CD8-positive, alpha-beta memory T cell (primary cell): ENCODE measurements at regions of chr15 and their contacts with region 1.

Region 1: DNA sequence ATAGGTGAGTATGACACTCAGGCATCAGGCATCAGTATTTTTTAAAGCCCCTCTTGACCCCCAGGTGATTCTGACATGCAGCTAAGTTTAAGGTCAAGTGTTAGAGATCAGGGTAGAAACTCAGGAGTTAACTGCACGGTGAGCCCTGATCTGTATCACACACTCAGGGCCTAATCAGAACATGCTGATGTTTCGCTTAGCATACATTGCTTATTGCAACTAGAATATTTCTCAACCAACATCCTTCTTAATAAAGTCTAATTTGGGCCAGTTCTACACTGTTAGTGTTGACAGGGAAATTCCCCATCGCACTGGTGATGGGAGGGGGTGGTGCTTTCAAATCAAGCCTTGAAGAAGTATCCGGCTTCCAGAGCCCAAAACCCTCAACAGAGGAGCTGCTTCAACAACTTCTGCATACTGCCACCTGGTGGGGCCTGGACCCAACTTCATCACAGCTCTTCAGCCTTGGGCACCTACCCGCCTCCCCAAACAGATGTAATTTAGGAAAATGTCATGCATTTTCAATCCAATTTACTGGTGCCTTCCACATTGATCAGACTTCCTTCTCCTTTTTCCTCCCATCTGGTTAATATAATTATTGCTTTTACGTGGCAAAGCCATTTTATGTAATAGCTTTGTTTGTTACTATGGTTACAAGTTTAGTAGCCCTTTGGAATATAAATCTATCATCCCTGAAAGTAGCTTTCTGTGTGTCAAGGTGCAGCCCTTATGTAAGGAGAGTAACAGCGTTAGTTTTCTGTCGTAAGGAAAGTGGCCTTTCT is 312.2 kb downstream of the RORA start:
- DNase-seq: peak; percentile 77 to 91 (median 78)
- H3K4me3 ChIP-seq: no peak overlapping the region
- H3K4me3 Mint-ChIP-seq: peak overlapping the region in 1 of 7 donors; percentile 44
- H3K27ac ChIP-seq: no peak overlapping the region
- H3K27ac Mint-ChIP-seq: peak overlapping the region; percentile 40 to 90 (median 72)
- H3K4me1 ChIP-seq: peaks cover 6% of the 10 kb centered on the region
- H3K4me1 Mint-ChIP-seq: peaks cover 11 to 12% (median 11%) of the 10 kb centered on the region in 3 donors
- H3K27me3 ChIP-seq: no peaks in the 10 kb centered on the region
- H3K27me3 Mint-ChIP-seq: peaks cover 0 to 2% of the 10 kb centered on the region in 2 donors

Region 2: DNA sequence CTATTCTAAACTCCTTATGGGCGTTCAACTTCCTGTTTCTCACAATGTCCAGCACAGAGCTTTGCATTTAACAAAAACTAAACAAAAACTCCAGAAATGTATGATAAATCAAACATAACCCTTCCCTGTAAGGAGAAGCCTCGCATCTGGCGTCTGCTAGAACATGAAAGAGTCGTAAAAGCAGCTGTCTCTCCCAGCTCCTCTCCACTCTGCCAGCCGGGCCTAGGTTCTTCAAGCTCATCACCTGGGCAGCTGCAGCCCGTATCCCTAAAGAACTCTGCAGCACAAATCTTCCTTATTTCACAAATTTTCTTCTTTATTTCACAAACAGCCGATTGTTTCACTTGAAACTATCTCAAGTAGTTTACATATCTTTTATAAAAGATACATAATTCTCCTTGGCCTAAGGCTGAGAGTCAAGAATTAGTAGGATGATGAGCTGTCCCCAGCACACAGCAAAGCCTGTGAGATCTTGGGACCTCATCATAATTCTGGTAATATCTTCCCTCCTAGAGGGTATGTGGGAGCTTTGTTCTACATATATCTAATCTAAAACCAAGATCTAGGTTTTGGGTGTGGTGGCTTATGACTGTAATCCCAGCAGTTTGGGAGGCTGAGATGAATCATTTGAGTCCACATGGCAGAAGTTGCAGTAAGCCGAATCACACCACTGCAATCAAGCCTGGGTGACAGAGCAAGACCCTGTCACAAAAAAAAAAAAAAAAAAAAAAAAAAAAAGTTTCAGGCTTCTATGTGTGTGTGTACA is 554.4 kb before region 1 on chr15:
- CTCF ChIA-PET with region 1: interaction called, 19 read pairs
- POLR2A ChIA-PET with region 1: no interaction called
- DNase-seq: no peak
- H3K4me3 ChIP-seq: no peak overlapping the region
- H3K4me3 Mint-ChIP-seq: no peak overlapping the region
- H3K27ac ChIP-seq: no peak overlapping the region
- H3K27ac Mint-ChIP-seq: peak overlapping the region; percentile 5 to 96 (median 48)
- H3K4me1 ChIP-seq: peaks cover 11% of the 10 kb centered on the region
- H3K4me1 Mint-ChIP-seq: peaks cover 20 to 34% (median 28%) of the 10 kb centered on the region in 3 donors
- H3K27me3 ChIP-seq: no peaks in the 10 kb centered on the region
- H3K27me3 Mint-ChIP-seq: peaks cover 0 to 3% of the 10 kb centered on the region in 2 donors

Region 3: DNA sequence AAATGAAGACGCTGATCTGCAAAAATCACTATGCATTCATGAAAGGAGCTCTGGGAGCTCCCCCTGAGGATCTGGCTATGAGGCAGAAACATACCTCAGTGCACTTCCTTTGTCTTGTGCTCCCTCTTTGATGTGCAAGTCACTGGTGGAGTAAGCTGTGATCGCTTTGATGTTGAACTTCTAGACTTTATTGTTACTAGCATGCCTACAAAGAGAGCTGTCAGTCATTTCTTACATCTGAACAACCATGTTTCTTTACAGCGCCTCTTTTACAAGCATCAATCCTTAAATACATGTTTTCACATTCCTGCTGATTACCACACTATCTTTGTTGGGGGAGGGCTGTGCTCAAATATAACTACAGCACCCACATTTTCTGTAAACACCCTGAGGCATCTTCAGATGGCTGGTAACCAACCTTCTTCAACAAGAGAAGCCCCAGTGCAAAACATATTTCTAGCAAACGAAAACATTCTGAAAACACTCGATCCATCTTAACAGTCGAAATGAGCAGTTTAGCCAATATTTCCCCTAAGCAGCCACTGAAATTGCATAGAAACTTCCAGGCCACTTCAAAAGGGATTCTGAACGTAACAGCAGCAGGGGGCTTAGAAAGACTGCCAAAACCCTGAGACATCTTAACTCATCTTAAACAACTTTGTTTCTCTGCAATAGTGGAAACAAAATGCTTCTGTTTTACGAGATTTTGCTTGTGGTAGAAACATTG is 336.1 kb before region 1 on chr15:
- CTCF ChIA-PET with region 1: interaction called, 19 read pairs
- POLR2A ChIA-PET with region 1: interaction called, 3 read pairs
- DNase-seq: peak in 4 of 5 donors; percentile 34 to 85 (median 77)
- H3K4me3 ChIP-seq: peak overlapping the region; percentile 36
- H3K4me3 Mint-ChIP-seq: peak overlapping the region; percentile 64 to 81 (median 78)
- H3K27ac ChIP-seq: no peak overlapping the region
- H3K27ac Mint-ChIP-seq: peak overlapping the region; percentile 93 to 99 (median 95)
- H3K4me1 ChIP-seq: peaks cover 91% of the 10 kb centered on the region
- H3K4me1 Mint-ChIP-seq: peaks cover 90 to 95% (median 94%) of the 10 kb centered on the region in 3 donors
- H3K27me3 ChIP-seq: no peaks in the 10 kb centered on the region
- H3K27me3 Mint-ChIP-seq: no peaks in the 10 kb centered on the region

Region 4: GRCh38 chr15:60592371-60593169 is 324.3 kb before region 1 on chr15:
- CTCF ChIA-PET with region 1: interaction called, 14 read pairs
- POLR2A ChIA-PET with region 1: no interaction called
- DNase-seq: peak; percentile 80 to 92 (median 88)
- H3K4me3 ChIP-seq: peak overlapping the region; percentile 74
- H3K4me3 Mint-ChIP-seq: peak overlapping the region; percentile 84 to 94 (median 85)
- H3K27ac ChIP-seq: peak overlapping the region; percentile 80
- H3K27ac Mint-ChIP-seq: peak overlapping the region; percentile 81 to 98 (median 89)
- H3K4me1 ChIP-seq: peaks cover 31% of the 10 kb centered on the region
- H3K4me1 Mint-ChIP-seq: peaks cover 37 to 54% (median 45%) of the 10 kb centered on the region in 3 donors
- H3K27me3 ChIP-seq: no peaks in the 10 kb centered on the region
- H3K27me3 Mint-ChIP-seq: peaks cover 0 to 2% of the 10 kb centered on the region in 2 donors

Region 5: DNA sequence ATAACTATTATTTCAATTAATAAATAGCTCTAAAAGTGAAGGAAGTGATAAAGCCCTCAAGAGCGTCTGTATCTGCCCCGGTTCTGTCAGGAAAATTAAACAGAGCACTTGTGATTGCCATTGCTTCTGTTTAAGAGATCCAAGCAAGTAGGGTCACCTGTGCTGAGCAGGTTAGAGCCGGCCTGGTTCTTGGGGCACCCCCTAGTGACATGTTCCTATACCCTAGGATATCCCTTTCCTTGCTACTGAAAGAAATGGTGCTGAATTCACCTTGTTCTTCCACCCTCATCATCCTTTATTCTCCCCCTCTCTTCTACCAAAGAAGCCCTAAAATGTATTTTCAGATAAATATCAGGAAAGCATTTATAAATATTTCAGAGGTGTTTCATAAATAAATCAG is 11.3 kb before region 1 on chr15:
- CTCF ChIA-PET with region 1: interaction called, 25 read pairs
- POLR2A ChIA-PET with region 1: no interaction called
- DNase-seq: peak in 3 of 5 donors; percentile 9 to 55 (median 11)
- H3K4me3 ChIP-seq: no peak overlapping the region
- H3K4me3 Mint-ChIP-seq: no peak overlapping the region
- H3K27ac ChIP-seq: no peak overlapping the region
- H3K27ac Mint-ChIP-seq: peak overlapping the region in 2 of 8 donors; percentile 19 to 23
- H3K4me1 ChIP-seq: no peaks in the 10 kb centered on the region
- H3K4me1 Mint-ChIP-seq: peaks cover 8 to 18% (median 13%) of the 10 kb centered on the region in 3 donors
- H3K27me3 ChIP-seq: no peaks in the 10 kb centered on the region
- H3K27me3 Mint-ChIP-seq: no peaks in the 10 kb centered on the region

Region 6: DNA sequence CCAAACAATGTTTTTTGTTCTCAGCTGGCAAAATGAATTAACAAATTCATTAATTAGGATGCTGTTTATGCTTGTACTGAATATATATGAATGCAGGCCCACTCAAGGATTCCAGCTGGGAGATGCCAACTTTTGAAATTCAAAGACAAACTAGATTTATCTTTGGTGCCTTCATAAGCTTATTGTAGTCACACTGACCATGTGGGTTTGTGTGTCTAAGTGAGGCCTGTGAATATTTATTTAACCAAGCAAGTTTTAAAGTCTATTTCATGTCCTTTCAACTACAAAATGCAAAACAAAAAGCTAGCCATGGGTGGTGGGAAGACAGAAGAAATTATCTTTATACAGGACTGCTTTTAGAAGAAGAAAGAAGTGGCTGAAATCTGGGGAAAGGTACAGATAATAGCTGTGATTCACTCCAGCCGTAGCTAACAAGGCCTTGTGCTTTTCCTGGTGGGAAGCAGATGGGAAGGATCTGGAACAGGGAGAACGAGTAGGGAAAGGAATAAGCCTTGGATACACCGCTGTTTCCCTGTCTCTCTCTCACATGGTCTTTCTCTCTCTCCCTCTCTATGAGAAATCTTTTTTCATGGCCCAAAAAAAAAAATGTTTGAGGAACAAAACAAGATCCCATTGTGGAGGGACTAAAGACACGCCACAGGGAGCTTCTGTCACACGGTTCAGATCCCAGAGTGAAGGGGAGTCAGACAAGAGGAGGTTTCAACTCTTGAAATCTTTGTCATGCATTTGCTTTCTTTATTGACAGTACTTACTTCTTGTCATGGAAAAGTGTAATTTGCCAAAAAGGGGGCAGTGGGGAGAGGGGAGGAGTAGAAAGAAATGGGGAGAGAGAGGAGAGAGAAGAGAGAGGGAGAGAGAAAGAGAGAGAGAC is 86.8 kb after region 1 on chr15:
- CTCF ChIA-PET with region 1: no interaction called
- POLR2A ChIA-PET with region 1: no interaction called
- DNase-seq: no peak
- H3K4me3 ChIP-seq: no peak overlapping the region
- H3K4me3 Mint-ChIP-seq: no peak overlapping the region
- H3K27ac ChIP-seq: no peak overlapping the region
- H3K27ac Mint-ChIP-seq: no peak overlapping the region
- H3K4me1 ChIP-seq: no peaks in the 10 kb centered on the region
- H3K4me1 Mint-ChIP-seq: no peaks in the 10 kb centered on the region
- H3K27me3 ChIP-seq: no peaks in the 10 kb centered on the region
- H3K27me3 Mint-ChIP-seq: peaks cover 13 to 48% of the 10 kb centered on the region in 2 donors

Region 7: DNA sequence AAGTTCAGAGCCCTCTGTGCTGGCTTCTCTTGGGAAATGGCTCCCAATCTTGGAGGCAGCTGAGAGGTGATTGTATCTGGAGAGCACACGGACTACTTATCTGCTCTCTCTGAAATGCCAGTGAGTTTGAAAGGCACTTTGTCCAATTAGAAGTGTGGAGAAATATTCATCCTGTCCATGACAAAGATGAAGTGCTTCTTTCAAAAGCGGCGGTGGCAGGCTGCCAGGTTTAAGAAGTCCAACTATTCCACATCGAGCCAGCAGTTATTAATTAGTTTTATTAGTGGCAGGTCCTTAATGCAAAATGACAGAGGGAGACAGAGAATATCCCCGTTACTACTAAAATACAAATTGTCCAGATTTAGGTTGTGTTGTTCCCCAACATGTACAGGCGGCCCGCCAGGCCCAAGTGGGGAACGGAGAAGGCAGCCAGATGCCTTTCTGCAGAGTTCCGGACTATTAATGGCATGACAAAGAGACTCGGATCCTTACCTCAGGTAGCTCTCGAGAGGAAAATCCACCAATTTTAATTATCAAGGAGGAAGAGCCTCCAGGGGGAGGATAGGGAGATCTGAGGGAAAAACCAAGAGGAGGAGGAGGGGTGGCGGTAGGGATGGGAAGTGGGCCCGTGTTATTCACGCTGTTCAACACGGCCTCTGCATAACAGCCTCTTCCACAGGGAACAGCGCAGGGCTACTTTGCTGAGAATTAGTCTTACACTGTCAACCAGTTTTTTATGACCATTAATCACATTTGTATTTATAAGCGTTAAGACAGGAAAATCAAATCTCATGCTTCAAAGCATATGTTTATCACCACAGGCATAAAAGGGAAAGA is 270.3 kb after region 1 on chr15:
- CTCF ChIA-PET with region 1: no interaction called
- POLR2A ChIA-PET with region 1: no interaction called
- DNase-seq: no peak
- H3K4me3 ChIP-seq: no peak overlapping the region
- H3K4me3 Mint-ChIP-seq: no peak overlapping the region
- H3K27ac ChIP-seq: no peak overlapping the region
- H3K27ac Mint-ChIP-seq: no peak overlapping the region
- H3K4me1 ChIP-seq: no peaks in the 10 kb centered on the region
- H3K4me1 Mint-ChIP-seq: no peaks in the 10 kb centered on the region
- H3K27me3 ChIP-seq: no peaks in the 10 kb centered on the region
- H3K27me3 Mint-ChIP-seq: peaks cover 15 to 50% of the 10 kb centered on the region in 2 donors